ENCODE measurements at regions of chr2 and their contacts with region 1.

Region 1: DNA sequence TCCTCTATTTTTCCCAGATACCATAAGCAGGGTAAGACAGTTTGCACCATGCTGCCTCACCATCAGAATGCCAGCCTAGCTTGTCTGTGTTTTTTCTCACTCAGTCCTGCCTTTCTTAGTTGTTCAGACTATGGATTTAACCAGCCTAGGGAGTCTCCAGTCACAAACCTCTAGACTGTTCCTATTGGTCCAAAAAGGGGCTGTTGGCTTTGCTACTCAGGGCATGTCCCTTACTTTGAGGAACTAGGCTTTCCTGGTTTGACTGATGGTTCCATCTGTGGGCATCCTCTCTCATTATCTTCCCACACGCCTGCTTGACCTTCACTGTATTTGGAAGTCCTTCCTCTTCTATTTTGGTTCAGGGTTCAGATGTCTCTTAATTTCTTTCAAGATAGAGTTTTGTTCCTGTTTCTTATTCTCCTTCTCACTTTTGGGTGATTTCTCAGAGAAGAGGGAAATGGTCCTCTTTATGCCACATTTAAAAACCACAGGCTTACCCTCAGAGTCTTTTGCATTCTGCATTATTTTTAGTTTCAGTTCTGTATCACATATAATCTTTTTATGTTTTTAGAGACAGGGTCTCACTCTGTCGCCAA is 31.3 kb upstream of the TMEM131 start:
- DNase-seq: no peak
- ATAC-seq: peak; percentile 72
- H3K4me3 Mint-ChIP-seq: peak overlapping the region; percentile 80
- H3K27ac Mint-ChIP-seq: peak overlapping the region; percentile 96
- H3K4me1 Mint-ChIP-seq: peaks cover 67% of the 10 kb centered on the region
- H3K27me3 Mint-ChIP-seq: no peaks in the 10 kb centered on the region
- CTCF ChIP-seq: no peak

Region 2: GRCh38 chr2:97663965-97664635 is 362.9 kb before region 1 on chr2 and contains the start of gene ACTR1B:
- CTCF ChIA-PET with region 1: no interaction called
- POLR2A ChIA-PET with region 1: no interaction called
- intact Hi-C with region 1: loop called (anchors 10 kb)
- DNase-seq: peak; percentile 93
- ATAC-seq: peak; percentile 89
- H3K4me3 Mint-ChIP-seq: peak within 1 kb of the TSS; percentile 92
- H3K27ac Mint-ChIP-seq: peak within 1 kb of the TSS; percentile 91
- H3K4me1 Mint-ChIP-seq: peaks cover 28% of the 10 kb centered on the region
- H3K27me3 Mint-ChIP-seq: no peaks in the 10 kb centered on the region
- CTCF ChIP-seq: no peak
- total RNA-seq, gene ACTR1B: 55.0 and 55.9 TPM in 2 replicates

Region 3: GRCh38 chr2:97906307-97906706 is 120.7 kb before region 1 on chr2:
- CTCF ChIA-PET with region 1: no interaction called
- POLR2A ChIA-PET with region 1: interaction called, 8 read pairs
- intact Hi-C with region 1: loop called (anchors 1 kb)
- DNase-seq: no peak
- ATAC-seq: no peak
- H3K4me3 Mint-ChIP-seq: peak overlapping the region; percentile 4
- H3K27ac Mint-ChIP-seq: peak overlapping the region; percentile 92
- H3K4me1 Mint-ChIP-seq: peaks cover 58% of the 10 kb centered on the region
- H3K27me3 Mint-ChIP-seq: no peaks in the 10 kb centered on the region
- CTCF ChIP-seq: no peak

Region 4: DNA sequence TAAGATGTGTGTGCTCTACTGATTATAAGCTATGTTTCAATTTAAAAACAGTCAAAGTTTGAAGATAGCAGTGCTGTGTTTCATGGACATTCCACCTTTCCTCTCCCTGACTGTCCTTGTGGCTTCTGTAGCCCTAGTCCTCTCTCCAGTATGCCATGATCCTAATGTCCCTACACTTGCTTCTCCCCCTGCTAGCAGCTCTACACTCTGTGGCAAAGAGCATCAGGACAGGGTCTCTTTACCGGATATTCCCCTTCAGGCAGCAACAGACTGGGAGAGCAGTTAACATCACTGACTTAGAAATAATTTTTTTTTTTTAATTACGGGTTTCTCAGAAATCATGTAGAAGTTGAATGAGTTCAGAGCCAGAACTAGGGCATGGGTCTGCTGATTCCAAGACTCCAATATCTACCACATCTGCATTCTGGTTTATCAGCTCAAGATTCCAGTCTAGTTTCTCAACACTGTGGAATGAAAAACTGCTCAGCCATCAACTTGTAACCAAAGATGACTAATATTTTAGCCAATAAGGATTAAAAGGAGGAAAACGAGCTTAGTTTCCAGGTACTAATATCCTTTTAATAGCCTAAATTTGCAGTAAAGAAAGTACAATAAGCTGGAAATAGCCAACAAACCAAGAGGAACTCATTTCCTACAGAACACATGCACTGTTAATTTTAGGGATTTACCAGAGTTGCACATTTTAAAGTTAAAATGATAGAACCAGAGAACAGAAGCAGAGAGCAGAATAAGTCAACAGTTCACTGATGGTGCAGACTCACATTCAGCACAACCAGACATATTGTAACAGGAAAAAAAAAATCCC is 76.5 kb before region 1 on chr2:
- CTCF ChIA-PET with region 1: no interaction called
- POLR2A ChIA-PET with region 1: no interaction called
- intact Hi-C with region 1: loop called (anchors 5 kb)
- DNase-seq: no peak
- ATAC-seq: no peak
- H3K4me3 Mint-ChIP-seq: no peak overlapping the region
- H3K27ac Mint-ChIP-seq: peak overlapping the region; percentile 73
- H3K4me1 Mint-ChIP-seq: peaks cover 90% of the 10 kb centered on the region
- H3K27me3 Mint-ChIP-seq: no peaks in the 10 kb centered on the region
- CTCF ChIP-seq: no peak

Region 5: GRCh38 chr2:98012561-98012991 is 14.4 kb before region 1 on chr2:
- CTCF ChIA-PET with region 1: interaction called, 5 read pairs
- POLR2A ChIA-PET with region 1: interaction called, 110 read pairs
- intact Hi-C with region 1: loop called (anchors 1 kb)
- DNase-seq: peak; percentile 61
- ATAC-seq: peak; percentile 81
- H3K4me3 Mint-ChIP-seq: peak overlapping the region; percentile 79
- H3K27ac Mint-ChIP-seq: peak overlapping the region; percentile 96
- H3K4me1 Mint-ChIP-seq: peaks cover 75% of the 10 kb centered on the region
- H3K27me3 Mint-ChIP-seq: no peaks in the 10 kb centered on the region
- CTCF ChIP-seq: no peak

Region 6: DNA sequence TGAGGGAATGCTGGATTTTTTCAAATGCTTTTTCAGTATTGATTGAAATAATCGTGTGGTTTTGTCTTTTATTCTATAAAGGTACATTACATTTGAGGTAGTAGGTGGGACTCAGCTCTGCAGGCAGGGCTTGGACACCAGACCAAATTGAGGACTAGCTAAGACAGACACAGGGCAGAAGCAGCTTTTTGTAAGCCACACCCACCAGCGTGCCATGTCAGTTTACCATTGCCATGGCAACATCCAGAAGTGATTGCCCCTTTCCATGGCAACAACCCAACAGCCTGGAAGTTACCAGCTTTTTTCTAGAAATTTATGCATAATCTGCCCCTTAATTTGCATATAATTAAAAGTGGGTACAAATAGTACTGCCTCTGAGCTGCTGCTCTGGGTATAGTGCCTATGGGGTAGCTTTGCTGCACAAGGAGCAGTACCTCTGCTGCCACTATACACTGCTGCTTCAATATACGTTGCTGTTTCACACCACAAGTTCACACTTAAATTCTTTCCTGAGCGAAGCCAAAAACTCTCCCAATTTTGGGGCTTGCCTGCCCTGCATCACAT is 36.3 kb after region 1 on chr2:
- CTCF ChIA-PET with region 1: no interaction called
- POLR2A ChIA-PET with region 1: no interaction called
- intact Hi-C with region 1: loop called (anchors 1 kb)
- DNase-seq: no peak
- ATAC-seq: no peak
- H3K4me3 Mint-ChIP-seq: no peak overlapping the region
- H3K27ac Mint-ChIP-seq: no peak overlapping the region
- H3K4me1 Mint-ChIP-seq: no peaks in the 10 kb centered on the region
- H3K27me3 Mint-ChIP-seq: peaks cover 1% of the 10 kb centered on the region
- CTCF ChIP-seq: no peak

Region 7: GRCh38 chr2:98134172-98135005 is 107.4 kb after region 1 on chr2:
- CTCF ChIA-PET with region 1: no interaction called
- POLR2A ChIA-PET with region 1: no interaction called
- intact Hi-C with region 1: loop called (anchors 1 kb)
- DNase-seq: peak; percentile 60
- ATAC-seq: peak; percentile 99
- H3K4me3 Mint-ChIP-seq: peak overlapping the region; percentile 29
- H3K27ac Mint-ChIP-seq: peak overlapping the region; percentile 18
- H3K4me1 Mint-ChIP-seq: peaks cover 20% of the 10 kb centered on the region
- H3K27me3 Mint-ChIP-seq: no peaks in the 10 kb centered on the region
- CTCF ChIP-seq: no peak

Region 8: GRCh38 chr2:98532756-98533155 is 505.7 kb after region 1 on chr2:
- CTCF ChIA-PET with region 1: no interaction called
- POLR2A ChIA-PET with region 1: no interaction called
- intact Hi-C with region 1: no loop called
- DNase-seq: no peak
- ATAC-seq: no peak
- H3K4me3 Mint-ChIP-seq: no peak overlapping the region
- H3K27ac Mint-ChIP-seq: no peak overlapping the region
- H3K4me1 Mint-ChIP-seq: no peaks in the 10 kb centered on the region
- H3K27me3 Mint-ChIP-seq: no peaks in the 10 kb centered on the region
- CTCF ChIP-seq: no peak

Measured in activated B cell treated with CpG ODN at 0.5 μM for 24 hours (primary cell).